Dendritic cell treated with granulocyte-macrophage colony-stimulating factor and Interleukin-4, amounts not matched to agents 40 ng/mL and 50 ng/mL, for 4 days (primary cell): ENCODE measurements at regions of chr14 and their contacts with region 1.

Region 1: DNA sequence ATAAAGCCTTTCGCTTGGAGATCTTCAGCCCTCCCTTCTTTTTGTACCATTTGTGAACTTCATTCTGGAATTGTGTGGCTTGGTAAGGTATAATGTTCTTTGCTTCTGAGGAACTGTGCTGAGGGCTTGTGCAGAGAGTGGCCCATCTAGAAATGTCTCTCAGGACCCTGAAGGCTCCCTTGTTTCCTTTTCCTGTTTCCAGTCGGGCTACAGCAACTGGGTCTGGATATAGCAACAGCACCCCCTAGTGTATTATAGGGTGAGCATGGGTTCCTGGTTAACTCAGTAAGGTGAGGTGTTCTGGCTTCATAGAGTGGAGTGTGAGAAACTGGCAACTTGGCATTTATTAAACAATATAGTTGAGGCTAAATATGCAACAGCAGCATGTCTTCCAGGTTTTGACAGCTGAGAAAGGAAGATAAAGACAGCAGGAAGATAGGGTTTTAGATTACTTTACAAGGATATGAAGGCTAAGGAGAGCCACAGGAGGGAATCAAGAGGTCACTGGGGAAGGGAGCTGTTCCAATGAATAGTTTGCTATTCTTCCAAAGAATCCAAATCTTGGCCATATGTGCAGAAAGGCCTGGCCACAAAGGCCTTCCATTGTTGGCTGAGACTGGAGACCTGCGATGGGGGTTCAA is 49.1 kb upstream of the RNU6-8 start:
- H3K4me3 Mint-ChIP-seq: no peak overlapping the region
- H3K27ac Mint-ChIP-seq: no peak overlapping the region
- H3K4me1 Mint-ChIP-seq: no peaks in the 10 kb centered on the region
- H3K27me3 Mint-ChIP-seq: peaks cover 3% of the 10 kb centered on the region

Region 2: GRCh38 chr14:31510222-31510621 is 741.9 kb before region 1 on chr14:
- intact Hi-C with region 1: loop called (anchors 1 kb)
- H3K4me3 Mint-ChIP-seq: no peak overlapping the region
- H3K27ac Mint-ChIP-seq: no peak overlapping the region
- H3K4me1 Mint-ChIP-seq: no peaks in the 10 kb centered on the region
- H3K27me3 Mint-ChIP-seq: peaks cover 12% of the 10 kb centered on the region